ENCODE measurements at regions of chr19 and their contacts with region 1.

Region 1: DNA sequence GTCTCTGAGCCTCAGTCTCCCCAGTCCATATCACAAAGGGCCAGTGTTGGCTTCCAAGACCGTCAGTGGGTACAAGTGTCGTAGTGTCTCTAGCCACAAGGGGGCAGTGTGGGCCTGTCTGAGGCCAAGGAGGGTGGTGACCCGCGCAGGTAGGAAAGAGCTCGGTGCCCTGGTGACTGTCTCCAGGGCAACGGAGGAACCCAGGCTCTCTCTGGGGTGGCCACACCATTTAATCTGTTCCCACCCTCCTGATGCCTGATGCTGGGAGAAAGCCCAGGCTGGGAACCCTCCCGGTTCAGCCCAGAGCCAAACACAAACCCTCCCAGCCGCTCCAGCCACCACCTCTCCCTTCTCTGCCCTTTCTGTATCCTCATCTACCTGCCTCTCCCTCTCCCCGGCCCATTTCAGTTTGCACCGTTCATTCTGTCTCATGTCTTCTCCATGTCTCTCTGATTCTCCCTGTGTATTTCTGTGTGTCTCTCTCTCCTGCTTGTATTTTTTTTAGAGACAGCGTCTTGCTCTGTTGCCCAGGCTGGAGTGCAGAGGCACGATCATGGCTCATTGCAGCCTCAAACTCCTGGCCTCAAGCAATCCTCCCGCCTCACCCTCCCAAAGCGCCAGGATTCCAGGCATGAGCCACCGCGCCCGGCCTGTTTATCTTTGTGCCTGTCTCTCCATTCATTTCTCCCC is 17.5 kb upstream of the MEIS3 start:
- DNase-seq: peak; percentile 60 to 77
- H3K4me3 ChIP-seq: no peak overlapping the region
- H3K27ac ChIP-seq: no peak overlapping the region
- H3K4me1 ChIP-seq: no peaks in the 10 kb centered on the region
- H3K27me3 ChIP-seq: peaks cover 28% of the 10 kb centered on the region
- CTCF ChIP-seq: peak; percentile 98

Region 2: GRCh38 chr19:47305309-47305751 is 131.5 kb before region 1 on chr19:
- CTCF ChIA-PET with region 1: interaction called, 14 read pairs
- POLR2A ChIA-PET with region 1: no interaction called
- intact Hi-C with region 1: no loop called
- DNase-seq: peak; percentile 64 to 65
- H3K4me3 ChIP-seq: peak overlapping the region; percentile 7; the same call in 1 of the 2 replicates
- H3K27ac ChIP-seq: no peak overlapping the region
- H3K4me1 ChIP-seq: peaks cover 15% of the 10 kb centered on the region
- H3K27me3 ChIP-seq: no peaks in the 10 kb centered on the region
- CTCF ChIP-seq: peak; percentile 99

Region 3: DNA sequence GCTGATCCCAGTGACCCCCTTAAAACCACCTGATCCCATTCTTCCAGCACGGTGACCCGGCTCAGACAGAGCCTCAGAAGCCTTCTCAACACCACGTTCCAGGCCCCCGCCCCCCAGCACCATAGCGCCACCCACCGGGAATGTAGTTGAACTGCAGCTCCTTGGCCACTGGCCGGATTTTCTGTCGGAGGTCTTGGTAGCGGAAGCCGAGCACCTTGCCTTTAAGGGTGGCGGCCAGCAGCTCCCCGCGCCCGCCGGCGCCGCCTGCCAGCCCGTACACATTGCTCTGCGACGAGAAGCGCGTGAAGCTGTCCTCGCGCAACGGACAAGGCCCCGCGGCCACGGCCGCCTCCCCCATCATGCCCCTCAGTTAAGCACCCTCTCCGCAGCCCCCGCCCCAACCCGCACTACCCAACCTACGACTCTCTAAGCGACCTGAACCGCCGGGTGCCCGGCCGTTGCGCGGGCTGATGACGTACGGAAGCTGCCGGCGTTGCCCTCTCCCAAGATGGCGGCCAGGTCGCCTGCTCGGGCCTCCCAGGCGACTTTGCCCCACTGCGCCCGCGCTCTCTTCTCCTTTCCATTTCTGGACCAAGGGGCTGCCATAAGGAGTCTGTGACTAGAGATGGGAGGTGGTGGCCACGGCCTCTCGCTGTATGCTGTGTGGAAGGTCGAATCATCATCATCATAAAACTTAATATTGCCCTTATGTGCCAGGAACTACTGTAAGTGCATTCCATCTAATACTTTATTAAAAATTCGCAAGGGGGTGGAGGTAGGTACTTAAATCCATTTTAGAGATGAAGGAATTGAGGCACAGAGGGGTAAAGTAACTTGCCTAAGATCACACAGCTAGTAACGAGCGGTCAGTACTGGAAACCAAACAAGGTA is 47.2 kb after region 1 on chr19 and contains the start of gene KPTN:
- CTCF ChIA-PET with region 1: interaction called, 11 read pairs
- POLR2A ChIA-PET with region 1: no interaction called
- intact Hi-C with region 1: loop called (anchors 1 kb)
- DNase-seq: peak; percentile 75 to 88
- H3K4me3 ChIP-seq: peak within 1 kb of the TSS; percentile 84
- H3K27ac ChIP-seq: peak within 1 kb of the TSS; percentile 76
- H3K4me1 ChIP-seq: peaks cover 10% of the 10 kb centered on the region; the same call in 1 of the 2 replicates
- H3K27me3 ChIP-seq: no peaks in the 10 kb centered on the region
- CTCF ChIP-seq: peak; percentile 99
- total RNA-seq, gene KPTN: 20.8 and 24.2 TPM in 2 replicates

Region 4: DNA sequence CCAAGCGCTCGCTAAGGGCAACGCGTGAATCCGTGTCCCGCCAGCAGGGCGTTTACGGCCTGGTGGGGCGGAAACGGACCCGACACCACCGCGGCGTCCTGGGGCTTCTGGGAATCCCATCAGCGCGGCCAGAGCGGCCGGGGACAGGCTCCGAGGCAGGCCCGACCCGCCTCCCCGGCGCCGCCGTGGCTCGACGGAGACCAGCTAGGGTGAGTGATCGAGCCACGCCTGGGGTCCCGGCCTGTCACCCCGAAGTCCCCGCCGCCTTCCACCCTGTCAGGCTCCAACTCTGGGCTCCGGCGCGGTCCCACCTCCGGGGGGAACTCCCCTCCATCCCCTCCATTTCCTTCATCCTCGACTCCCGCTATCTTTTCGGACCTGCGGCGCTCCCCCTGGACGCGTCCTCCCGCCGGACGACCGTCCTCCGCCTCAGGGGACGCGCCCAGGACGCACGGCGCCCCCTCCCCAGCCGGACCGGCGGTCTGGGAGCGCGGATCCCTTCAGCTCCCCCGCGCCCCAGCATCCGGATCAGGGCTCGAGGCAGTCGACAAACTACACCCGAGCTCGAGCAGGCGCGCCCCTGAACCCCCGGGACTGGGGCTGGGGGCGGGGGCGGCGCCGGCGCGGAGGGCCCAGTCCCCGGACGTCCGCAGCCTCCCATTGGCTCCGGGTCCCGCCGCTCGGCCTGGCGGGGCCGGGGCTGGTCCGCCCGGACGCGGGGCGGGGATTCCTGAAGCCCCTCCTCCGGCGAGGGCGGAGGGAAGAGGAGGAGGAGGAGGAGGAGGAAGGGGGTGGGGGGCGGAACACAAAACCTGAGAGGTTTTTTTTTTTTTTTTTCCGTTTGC is 171.4 kb after region 1 on chr19:
- CTCF ChIA-PET with region 1: no interaction called
- POLR2A ChIA-PET with region 1: no interaction called
- intact Hi-C with region 1: loop called (anchors 2 kb)
- DNase-seq: peak; percentile 80 to 98
- H3K4me3 ChIP-seq: peak overlapping the region; percentile 100
- H3K27ac ChIP-seq: peak overlapping the region; percentile 68
- H3K4me1 ChIP-seq: peaks cover 11% of the 10 kb centered on the region; the same call in 1 of the 2 replicates
- H3K27me3 ChIP-seq: no peaks in the 10 kb centered on the region
- CTCF ChIP-seq: peak; percentile 21; the same call in 1 of the 2 replicates

Region 5: DNA sequence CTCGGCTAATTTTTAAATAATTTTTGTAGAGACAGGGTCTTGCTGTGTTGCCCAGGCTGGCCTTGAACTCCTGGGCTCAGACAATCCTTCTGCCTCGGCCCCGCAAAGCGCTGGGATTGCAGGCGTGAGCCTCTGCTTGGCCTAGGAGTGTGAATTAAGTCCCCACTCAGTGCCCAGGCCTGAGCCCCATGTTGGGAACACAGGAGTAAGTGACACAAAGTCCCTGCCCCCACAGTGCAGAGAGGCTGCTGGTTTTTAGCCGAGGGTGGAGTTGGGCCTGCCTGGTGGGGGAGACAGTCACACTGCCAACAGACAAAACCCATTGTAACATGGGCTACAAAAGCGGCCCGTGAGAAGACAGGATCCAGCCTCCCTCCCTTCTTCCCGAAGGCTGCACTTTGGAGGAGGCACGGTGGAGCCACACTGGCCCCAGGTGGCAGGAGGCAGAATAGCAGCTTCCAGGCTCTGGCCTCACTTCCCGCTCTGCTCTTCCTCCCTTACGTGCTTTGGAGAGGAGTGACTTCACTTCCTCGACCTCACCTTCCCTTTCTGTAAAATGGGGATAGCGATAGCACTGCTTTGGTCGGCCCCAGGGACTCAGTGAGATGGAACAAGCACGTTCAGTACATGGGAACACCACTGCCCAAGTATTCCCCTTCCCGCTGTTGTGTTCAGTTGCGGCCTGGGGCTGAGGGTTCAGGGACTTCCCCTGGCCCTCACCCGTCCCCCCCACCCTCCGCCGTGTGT is 261.2 kb after region 1 on chr19:
- CTCF ChIA-PET with region 1: interaction called, 4 read pairs
- POLR2A ChIA-PET with region 1: no interaction called
- intact Hi-C with region 1: loop called (anchors 1 kb)
- DNase-seq: peak; percentile 70 to 78
- H3K4me3 ChIP-seq: no peak overlapping the region
- H3K27ac ChIP-seq: 0 out of 2 replicates have a peak overlapping the region, but pooled peaks have one; percentile 27
- H3K4me1 ChIP-seq: no peaks in the 10 kb centered on the region
- H3K27me3 ChIP-seq: no peaks in the 10 kb centered on the region
- CTCF ChIP-seq: peak; percentile 99

Region 6: GRCh38 chr19:47707135-47707925 is 270.5 kb after region 1 on chr19:
- CTCF ChIA-PET with region 1: interaction called, 27 read pairs
- POLR2A ChIA-PET with region 1: no interaction called
- intact Hi-C with region 1: loop called (anchors 1 kb)
- DNase-seq: peak; percentile 71 to 82
- H3K4me3 ChIP-seq: no peak overlapping the region
- H3K27ac ChIP-seq: no peak overlapping the region
- H3K4me1 ChIP-seq: no peaks in the 10 kb centered on the region
- H3K27me3 ChIP-seq: no peaks in the 10 kb centered on the region
- CTCF ChIP-seq: peak; percentile 93

Measured in PC-9 (cell line).